B cell (primary cell): ENCODE measurements at regions of chr1 and their contacts with region 1.

Region 1: GRCh38 chr1:40373338-40374283 is at the start of gene SMAP2:
- DNase-seq: peak; percentile 95
- ATAC-seq: peak; percentile 88
- H3K4me3 ChIP-seq: peak within 1 kb of the TSS; percentile 76 to 100 (median 97)
- H3K4me3 Mint-ChIP-seq: peak within 1 kb of the TSS; percentile 96
- H3K27ac ChIP-seq: peak within 1 kb of the TSS; percentile 89 to 100
- H3K27ac Mint-ChIP-seq: peak within 1 kb of the TSS; percentile 95
- H3K4me1 ChIP-seq: peaks cover 36 to 37% of the 10 kb centered on the region in 2 donors
- H3K4me1 Mint-ChIP-seq: peaks cover 48% of the 10 kb centered on the region
- H3K27me3 ChIP-seq: no peaks in the 10 kb centered on the region
- H3K27me3 Mint-ChIP-seq: no peaks in the 10 kb centered on the region
- CTCF ChIP-seq: no peak
- total RNA-seq, gene SMAP2: 300 and 305 TPM in 2 replicates

Region 2: DNA sequence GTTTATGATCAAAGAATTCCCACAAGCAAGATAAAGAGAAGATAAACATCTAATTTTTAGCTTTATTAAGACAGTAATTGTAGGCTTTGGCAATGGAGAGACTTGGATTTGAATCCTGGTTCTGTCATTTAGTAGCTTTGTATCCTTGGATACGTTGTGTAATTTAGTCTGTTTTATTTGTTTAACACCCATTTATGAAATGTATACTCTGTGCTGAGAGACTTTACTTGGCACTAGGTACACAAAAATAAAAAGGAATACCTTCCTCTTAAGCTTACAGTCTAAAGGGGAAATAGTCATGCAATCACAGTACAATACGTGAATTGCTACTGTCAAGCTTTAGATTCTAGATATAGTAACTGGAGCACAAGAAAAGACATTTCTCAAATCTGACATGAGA is 91.8 kb before region 1 on chr1:
- CTCF ChIA-PET with region 1: no interaction called
- POLR2A ChIA-PET with region 1: no interaction called
- intact Hi-C with region 1: no loop called
- DNase-seq: no peak
- ATAC-seq: no peak
- H3K4me3 ChIP-seq: no peak overlapping the region
- H3K4me3 Mint-ChIP-seq: no peak overlapping the region
- H3K27ac ChIP-seq: no peak overlapping the region
- H3K27ac Mint-ChIP-seq: no peak overlapping the region
- H3K4me1 ChIP-seq: no peaks in the 10 kb centered on the region
- H3K4me1 Mint-ChIP-seq: no peaks in the 10 kb centered on the region
- H3K27me3 ChIP-seq: no peaks in the 10 kb centered on the region
- H3K27me3 Mint-ChIP-seq: no peaks in the 10 kb centered on the region
- CTCF ChIP-seq: no peak

Region 3: DNA sequence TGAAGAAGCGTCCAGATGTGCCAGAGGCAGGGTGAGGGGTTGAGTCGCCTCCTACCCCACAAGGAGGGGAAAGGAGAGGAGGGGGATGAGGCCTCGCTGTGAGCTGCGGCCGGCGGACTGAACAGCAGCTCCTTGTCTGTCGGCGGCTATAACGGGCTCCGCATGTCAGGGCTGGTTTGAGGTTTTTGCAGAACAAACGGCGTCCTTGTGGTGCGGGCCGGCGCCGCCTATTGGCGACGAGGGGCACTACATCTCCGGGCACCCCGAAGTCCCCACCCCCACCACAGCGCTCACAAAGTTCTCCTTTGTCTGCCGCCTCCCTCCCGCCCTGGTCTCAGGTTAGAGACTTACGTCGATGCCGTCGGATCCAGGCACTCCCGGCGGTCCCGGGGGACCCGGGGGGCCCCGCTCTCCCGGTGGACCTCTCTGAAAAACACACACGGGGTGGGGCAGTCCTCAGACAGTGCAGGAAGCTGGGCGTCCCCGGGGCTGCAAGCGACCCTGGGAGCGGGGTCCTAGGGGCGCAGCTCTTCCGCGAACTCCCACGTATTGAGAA is 58.3 kb before region 1 on chr1:
- CTCF ChIA-PET with region 1: interaction called, 3 read pairs
- POLR2A ChIA-PET with region 1: no interaction called
- intact Hi-C with region 1: loop called (anchors 2 kb)
- DNase-seq: peak; percentile 94
- ATAC-seq: peak; percentile 61
- H3K4me3 ChIP-seq: peak overlapping the region; percentile 43 to 78 (median 66)
- H3K4me3 Mint-ChIP-seq: peak overlapping the region; percentile 92
- H3K27ac ChIP-seq: peak overlapping the region in 1 of 2 donors; percentile 40
- H3K27ac Mint-ChIP-seq: peak overlapping the region; percentile 76
- H3K4me1 ChIP-seq: peaks cover 41 to 59% of the 10 kb centered on the region in 2 donors
- H3K4me1 Mint-ChIP-seq: peaks cover 57% of the 10 kb centered on the region
- H3K27me3 ChIP-seq: peaks cover 0 to 3% (median 1%) of the 10 kb centered on the region in 4 experiments
- H3K27me3 Mint-ChIP-seq: peaks cover 5% of the 10 kb centered on the region
- CTCF ChIP-seq: peak; percentile 95

Region 4: DNA sequence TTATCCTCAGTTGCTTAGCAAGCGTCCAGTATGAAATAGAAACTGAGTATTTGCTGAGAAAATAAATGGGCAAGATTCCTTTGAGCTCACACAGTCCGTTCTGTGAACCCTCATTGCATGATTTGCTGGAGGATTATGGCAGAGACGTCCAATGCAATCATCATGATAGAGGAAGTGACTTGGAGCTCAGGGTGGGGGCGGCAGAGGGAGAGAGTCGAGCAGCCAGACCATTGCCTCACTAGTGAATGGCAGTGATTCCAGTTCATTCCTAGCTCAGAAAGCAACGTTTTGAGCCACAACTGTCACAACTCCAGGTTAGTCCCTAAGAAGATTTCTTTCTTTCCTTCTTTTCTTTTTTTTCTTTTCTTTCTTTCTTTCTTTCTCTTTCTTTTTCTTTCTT is 29.0 kb before region 1 on chr1:
- CTCF ChIA-PET with region 1: interaction called, 17 read pairs
- POLR2A ChIA-PET with region 1: interaction called, 7 read pairs
- intact Hi-C with region 1: no loop called
- DNase-seq: peak; percentile 68
- ATAC-seq: peak; percentile 89
- H3K4me3 ChIP-seq: peak overlapping the region in 4 of 5 experiments; percentile 27 to 62 (median 36)
- H3K4me3 Mint-ChIP-seq: peak overlapping the region; percentile 68
- H3K27ac ChIP-seq: peak overlapping the region; percentile 42 to 71
- H3K27ac Mint-ChIP-seq: peak overlapping the region; percentile 60
- H3K4me1 ChIP-seq: peaks cover 35 to 36% of the 10 kb centered on the region in 2 donors
- H3K4me1 Mint-ChIP-seq: peaks cover 54% of the 10 kb centered on the region
- H3K27me3 ChIP-seq: no peaks in the 10 kb centered on the region
- H3K27me3 Mint-ChIP-seq: no peaks in the 10 kb centered on the region
- CTCF ChIP-seq: no peak

Region 5: DNA sequence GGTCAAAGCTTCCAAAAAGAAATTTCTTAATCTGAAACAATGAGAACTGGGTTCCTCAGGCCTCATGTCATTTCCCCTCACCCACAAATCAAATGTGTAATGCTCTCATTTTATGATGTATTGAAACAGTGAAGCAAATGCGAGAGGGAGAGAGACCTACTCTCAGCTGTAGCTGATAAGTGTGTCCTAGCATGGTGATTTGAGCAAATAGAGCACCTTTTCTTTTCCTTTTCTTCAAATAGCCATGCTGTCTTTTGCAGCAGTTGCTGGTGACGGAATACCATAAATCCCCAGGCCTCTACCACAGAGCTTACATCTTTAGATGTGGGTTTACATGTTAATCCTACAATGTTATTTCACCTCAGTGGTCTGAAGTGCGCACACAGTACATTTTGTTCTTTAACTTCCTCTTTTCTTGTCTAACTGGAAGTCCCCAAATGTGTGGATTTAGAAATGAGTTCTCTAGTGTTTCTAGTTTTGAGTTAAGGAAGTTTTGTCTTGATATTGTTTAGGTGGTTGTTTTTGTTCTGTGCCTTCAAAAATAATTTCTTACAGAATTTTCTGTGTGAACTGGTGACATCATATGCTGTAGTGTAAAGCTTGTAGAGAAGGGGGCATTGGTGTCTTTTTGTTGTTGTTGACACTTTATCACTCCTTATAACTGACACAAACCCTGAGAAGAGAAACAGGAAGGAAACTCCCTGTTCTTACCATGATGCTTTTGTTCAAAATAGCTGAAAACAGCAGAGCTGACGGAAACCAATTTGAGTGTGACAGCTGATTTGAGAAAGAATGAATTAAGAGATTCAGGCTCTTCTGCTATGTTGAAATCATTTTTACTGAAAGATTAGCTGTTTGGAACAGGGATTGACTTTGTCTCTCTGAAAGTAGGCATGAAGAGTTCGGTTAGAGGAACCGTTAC is 12.1 kb after region 1 on chr1:
- CTCF ChIA-PET with region 1: interaction called, 51 read pairs
- POLR2A ChIA-PET with region 1: interaction called, 90 read pairs
- intact Hi-C with region 1: loop called (anchors 1 kb)
- DNase-seq: peak; percentile 94
- ATAC-seq: peak; percentile 73
- H3K4me3 ChIP-seq: peak overlapping the region; percentile 30 to 70 (median 31)
- H3K4me3 Mint-ChIP-seq: peak overlapping the region; percentile 87
- H3K27ac ChIP-seq: peak overlapping the region; percentile 99 to 100
- H3K27ac Mint-ChIP-seq: peak overlapping the region; percentile 97
- H3K4me1 ChIP-seq: peaks cover 94 to 98% of the 10 kb centered on the region in 2 donors
- H3K4me1 Mint-ChIP-seq: peaks cover 91% of the 10 kb centered on the region
- H3K27me3 ChIP-seq: no peaks in the 10 kb centered on the region
- H3K27me3 Mint-ChIP-seq: no peaks in the 10 kb centered on the region
- CTCF ChIP-seq: no peak

Region 6: GRCh38 chr1:40449684-40450494 is 76.3 kb after region 1 on chr1 and contains the start of gene ZFP69B:
- CTCF ChIA-PET with region 1: no interaction called
- POLR2A ChIA-PET with region 1: no interaction called
- intact Hi-C with region 1: loop called (anchors 5 kb)
- DNase-seq: peak; percentile 92
- ATAC-seq: peak; percentile 81
- H3K4me3 ChIP-seq: peak within 1 kb of the TSS; percentile 62 to 79 (median 76)
- H3K4me3 Mint-ChIP-seq: peak within 1 kb of the TSS; percentile 96
- H3K27ac ChIP-seq: peak within 1 kb of the TSS in 1 of 2 donors; percentile 60
- H3K27ac Mint-ChIP-seq: peak within 1 kb of the TSS; percentile 93
- H3K4me1 ChIP-seq: peaks cover 14 to 17% of the 10 kb centered on the region in 2 donors
- H3K4me1 Mint-ChIP-seq: peaks cover 27% of the 10 kb centered on the region
- H3K27me3 ChIP-seq: no peaks in the 10 kb centered on the region
- H3K27me3 Mint-ChIP-seq: no peaks in the 10 kb centered on the region
- CTCF ChIP-seq: no peak
- total RNA-seq, gene ZFP69B: 10.8 and 11.8 TPM in 2 replicates

Region 7: DNA sequence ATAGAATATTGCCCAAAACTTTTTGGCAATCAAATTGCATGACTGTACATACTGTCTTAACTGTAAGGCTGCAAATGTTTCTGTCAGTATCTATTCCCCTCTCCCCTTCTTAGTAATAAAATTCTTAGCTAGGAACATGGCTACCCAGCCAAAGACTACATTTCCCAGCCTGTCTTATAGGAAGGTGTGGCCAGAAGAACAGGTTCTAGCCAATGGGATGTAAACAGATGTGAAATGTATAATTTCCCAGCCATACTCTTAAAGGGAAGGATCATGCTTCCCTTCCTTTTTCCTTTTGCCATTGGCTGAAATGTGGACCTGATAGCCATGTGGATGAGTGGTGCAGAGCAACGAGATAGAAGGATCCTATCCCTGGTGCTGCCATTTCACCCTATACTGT is 1552.1 kb after region 1 on chr1:
- CTCF ChIA-PET with region 1: no interaction called
- POLR2A ChIA-PET with region 1: no interaction called
- intact Hi-C with region 1: no loop called
- DNase-seq: no peak
- ATAC-seq: no peak
- H3K4me3 ChIP-seq: no peak overlapping the region
- H3K4me3 Mint-ChIP-seq: no peak overlapping the region
- H3K27ac ChIP-seq: no peak overlapping the region
- H3K27ac Mint-ChIP-seq: no peak overlapping the region
- H3K4me1 ChIP-seq: no peaks in the 10 kb centered on the region
- H3K4me1 Mint-ChIP-seq: no peaks in the 10 kb centered on the region
- H3K27me3 ChIP-seq: no peaks in the 10 kb centered on the region
- H3K27me3 Mint-ChIP-seq: peaks cover 26% of the 10 kb centered on the region
- CTCF ChIP-seq: no peak